Dorsolateral prefrontal cortex (tissue), 120 donors: ENCODE measurements at regions of chr1 and their contacts with region 1.

Region 1: DNA sequence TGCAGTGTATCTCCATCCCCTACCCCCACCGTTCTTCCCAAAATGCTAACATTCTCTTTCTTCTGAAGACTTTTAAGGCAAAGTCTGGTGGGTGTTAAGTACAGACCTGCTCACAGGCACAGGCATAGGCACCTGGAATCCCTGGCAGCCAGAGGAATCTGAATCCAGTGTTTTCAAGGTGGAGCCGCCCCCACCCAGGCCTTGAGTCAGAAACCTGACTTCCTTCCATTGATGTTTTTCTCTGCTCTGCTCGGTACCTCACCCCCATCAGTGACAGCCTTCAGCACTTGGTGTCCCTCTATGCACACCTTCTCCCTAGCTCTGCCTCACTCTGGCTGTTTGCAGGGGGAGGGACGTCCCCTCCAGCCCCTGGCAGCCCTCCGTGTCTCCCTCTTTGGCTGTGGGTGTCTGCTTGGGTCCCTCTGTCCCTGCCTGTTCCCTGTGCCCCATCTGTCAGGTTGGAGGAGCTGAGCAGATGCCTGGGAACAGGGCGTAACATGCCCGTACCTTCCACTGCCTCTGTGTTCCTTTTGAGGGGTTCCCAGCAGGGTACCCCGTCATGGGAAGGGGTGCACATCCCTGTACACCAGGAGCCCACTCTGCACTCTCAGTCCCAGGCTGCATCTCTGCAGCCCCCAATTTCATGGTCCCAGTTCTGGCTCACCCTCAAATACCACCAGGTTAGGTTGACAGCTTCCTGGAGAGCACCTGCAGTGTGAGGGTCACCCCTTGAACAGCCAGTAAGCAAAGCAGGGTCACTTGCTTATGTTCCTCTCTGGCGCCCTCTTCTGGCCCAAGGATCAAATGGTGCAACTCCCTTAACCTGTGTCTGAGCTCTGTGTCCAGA is 6.7 kb downstream of the NCDN start:
- DNase-seq: peak in 8 of 10 donors; percentile 67 to 83 (median 72)
- H3K4me3 ChIP-seq: peak overlapping the region in 4 of 59 donors; percentile 9 to 95 (median 45)
- H3K27ac ChIP-seq: peak overlapping the region in 18 of 59 donors; percentile 4 to 70 (median 36)
- H3K27me3 ChIP-seq: no peaks in the 10 kb centered on the region
- CTCF ChIP-seq: peak; percentile 58 to 83 (median 76)

Region 2: GRCh38 chr1:35451125-35451528 is 113.1 kb before region 1 on chr1:
- intact Hi-C with region 1: loop called (anchors 2 to 5 kb)
- DNase-seq: peak; percentile 80 to 94 (median 86)
- H3K4me3 ChIP-seq: no peak overlapping the region
- H3K27ac ChIP-seq: peak overlapping the region in 43 of 59 donors; percentile 1 to 79 (median 51)
- H3K27me3 ChIP-seq: no peaks in the 10 kb centered on the region
- CTCF ChIP-seq: peak; percentile 50 to 94 (median 87)

Region 3: GRCh38 chr1:35524106-35524505 is 40.2 kb before region 1 on chr1:
- intact Hi-C with region 1: no loop called
- DNase-seq: no peak
- H3K4me3 ChIP-seq: no peak overlapping the region
- H3K27ac ChIP-seq: no peak overlapping the region
- H3K27me3 ChIP-seq: no peaks in the 10 kb centered on the region
- CTCF ChIP-seq: no peak

Region 4: DNA sequence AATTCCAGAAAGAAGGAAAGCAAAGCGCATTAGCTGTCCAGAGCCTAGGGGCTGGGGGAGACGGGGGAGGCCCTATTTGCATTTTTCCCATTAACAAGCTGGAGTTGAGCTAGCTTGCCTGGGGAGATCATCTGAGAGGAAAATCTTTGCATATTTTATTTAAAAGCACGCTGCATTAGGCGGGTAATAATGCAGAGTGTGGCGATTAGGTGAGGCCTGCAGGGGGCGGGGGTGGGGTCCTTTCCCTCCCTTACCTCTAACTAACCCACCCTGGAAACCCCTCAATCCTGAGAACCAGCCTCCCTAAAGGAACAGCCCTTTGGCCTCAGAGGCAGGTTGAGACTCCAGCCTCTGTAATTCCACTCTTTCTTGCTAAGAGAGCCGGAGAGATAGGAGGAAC is 138.2 kb after region 1 on chr1:
- intact Hi-C with region 1: no loop called
- DNase-seq: no peak
- H3K4me3 ChIP-seq: no peak overlapping the region
- H3K27ac ChIP-seq: no peak overlapping the region
- H3K27me3 ChIP-seq: peaks cover 0 to 8% (median 0%) of the 10 kb centered on the region in 45 donors
- CTCF ChIP-seq: no peak

Region 5: DNA sequence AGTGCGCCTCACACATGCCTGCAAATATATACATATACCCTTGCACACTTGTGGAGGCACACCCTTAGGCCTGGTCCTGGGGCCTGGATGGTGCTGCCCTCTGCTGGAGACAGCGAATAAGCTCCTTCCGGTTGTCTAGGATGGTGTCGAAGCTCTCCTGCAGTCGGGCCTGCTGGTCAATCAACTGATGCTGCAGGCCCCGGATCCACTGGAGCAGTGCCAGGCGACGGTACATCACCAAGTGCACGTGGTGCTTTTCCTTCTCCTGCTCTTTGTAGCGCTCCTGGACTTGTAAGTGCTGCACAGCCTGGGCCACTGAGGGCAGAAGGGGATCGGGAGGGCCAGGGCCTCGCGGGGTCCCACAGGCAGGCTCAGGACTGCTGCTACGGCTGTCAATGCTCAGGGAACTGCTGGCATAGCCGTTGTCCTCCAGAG is 151.3 kb after region 1 on chr1:
- intact Hi-C with region 1: loop called in 1 of 2 experiments (anchors 1 kb)
- DNase-seq: peak; percentile 69 to 86 (median 78)
- H3K4me3 ChIP-seq: peak overlapping the region in 57 of 59 donors; percentile 5 to 99 (median 90)
- H3K27ac ChIP-seq: peak overlapping the region in 53 of 59 donors; percentile 18 to 98 (median 87)
- H3K27me3 ChIP-seq: no peaks in the 10 kb centered on the region
- CTCF ChIP-seq: peak; percentile 71 to 95 (median 86)

Region 6: GRCh38 chr1:35726450-35727433 is 162.5 kb after region 1 on chr1:
- intact Hi-C with region 1: loop called (anchors 1 to 2 kb)
- DNase-seq: peak in 9 of 10 donors; percentile 41 to 74 (median 64)
- H3K4me3 ChIP-seq: peak overlapping the region in 2 of 59 donors; percentile 1 to 15
- H3K27ac ChIP-seq: peak overlapping the region in 13 of 59 donors; percentile 3 to 75 (median 55)
- H3K27me3 ChIP-seq: no peaks in the 10 kb centered on the region
- CTCF ChIP-seq: peak; percentile 43 to 95 (median 90)

Region 7: DNA sequence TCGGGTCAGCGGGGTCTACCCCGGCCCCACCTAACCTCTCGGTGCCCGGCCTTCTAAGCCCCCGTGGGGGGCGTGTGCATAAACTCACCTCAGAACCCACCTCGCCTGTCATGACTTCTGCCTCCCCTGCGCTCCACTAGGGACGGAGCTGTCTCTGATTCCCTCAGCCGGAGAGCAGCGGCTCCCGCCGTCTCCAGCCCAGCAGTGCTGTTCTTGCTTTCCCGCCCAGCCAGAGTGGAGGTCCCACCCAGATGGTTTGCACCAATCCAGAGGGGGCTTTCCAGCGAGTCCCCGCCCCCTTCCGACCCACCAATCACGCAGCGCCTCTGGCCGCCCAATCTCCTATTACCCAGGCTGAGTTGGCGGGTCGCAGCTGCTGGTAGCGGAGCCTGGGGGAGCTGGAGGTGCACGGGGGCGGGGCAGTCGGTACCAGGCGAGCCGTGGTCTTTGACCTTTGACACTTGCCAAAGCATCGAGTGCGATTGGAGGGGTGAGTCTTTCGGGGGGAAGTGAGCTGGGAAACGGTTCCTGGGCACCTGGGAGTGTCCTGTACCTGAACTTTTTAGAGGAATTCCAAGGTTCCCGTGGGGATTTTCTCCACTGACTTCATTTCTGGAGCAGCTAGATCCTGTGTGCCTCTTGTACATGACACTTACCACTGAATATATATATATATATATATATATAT is 205.6 kb after region 1 on chr1 and contains the start of gene CLSPN:
- intact Hi-C with region 1: loop called (anchors 2 to 5 kb)
- DNase-seq: peak; percentile 78 to 97 (median 94)
- H3K4me3 ChIP-seq: peak within 1 kb of the TSS; percentile 63 to 96 (median 81)
- H3K27ac ChIP-seq: peak within 1 kb of the TSS in 45 of 59 donors; percentile 3 to 88 (median 63)
- H3K27me3 ChIP-seq: no peaks in the 10 kb centered on the region
- CTCF ChIP-seq: peak in 14 of 56 donors; percentile 3 to 33 (median 16)
- total RNA-seq, gene CLSPN: 0.48 to 6.7 (median 2.4) TPM

Region 8: DNA sequence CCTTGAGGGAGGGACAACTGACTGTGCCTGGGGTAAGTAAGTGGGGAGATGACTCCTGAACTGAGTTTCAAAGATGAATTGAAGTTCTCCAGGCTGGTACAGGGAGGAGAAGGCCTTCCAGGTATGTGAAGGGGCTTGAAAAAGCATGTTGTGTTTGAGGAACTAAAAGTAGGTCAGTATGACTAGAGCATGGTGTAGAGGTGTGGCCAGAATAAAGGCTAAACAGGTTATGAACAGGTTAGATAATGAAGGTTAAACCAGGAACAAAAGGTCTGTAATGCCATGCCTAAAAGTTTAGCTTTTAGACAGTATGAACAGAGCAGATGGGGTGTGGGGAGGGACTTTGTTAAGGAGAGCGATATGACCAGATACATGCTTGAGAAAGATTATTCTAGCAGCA is 212.8 kb after region 1 on chr1:
- intact Hi-C with region 1: loop called (anchors 2 to 5 kb)
- DNase-seq: no peak
- H3K4me3 ChIP-seq: no peak overlapping the region
- H3K27ac ChIP-seq: no peak overlapping the region
- H3K27me3 ChIP-seq: no peaks in the 10 kb centered on the region
- CTCF ChIP-seq: no peak